ENCODE measurements at regions of chr12 and their contacts with region 1.

Region 1: DNA sequence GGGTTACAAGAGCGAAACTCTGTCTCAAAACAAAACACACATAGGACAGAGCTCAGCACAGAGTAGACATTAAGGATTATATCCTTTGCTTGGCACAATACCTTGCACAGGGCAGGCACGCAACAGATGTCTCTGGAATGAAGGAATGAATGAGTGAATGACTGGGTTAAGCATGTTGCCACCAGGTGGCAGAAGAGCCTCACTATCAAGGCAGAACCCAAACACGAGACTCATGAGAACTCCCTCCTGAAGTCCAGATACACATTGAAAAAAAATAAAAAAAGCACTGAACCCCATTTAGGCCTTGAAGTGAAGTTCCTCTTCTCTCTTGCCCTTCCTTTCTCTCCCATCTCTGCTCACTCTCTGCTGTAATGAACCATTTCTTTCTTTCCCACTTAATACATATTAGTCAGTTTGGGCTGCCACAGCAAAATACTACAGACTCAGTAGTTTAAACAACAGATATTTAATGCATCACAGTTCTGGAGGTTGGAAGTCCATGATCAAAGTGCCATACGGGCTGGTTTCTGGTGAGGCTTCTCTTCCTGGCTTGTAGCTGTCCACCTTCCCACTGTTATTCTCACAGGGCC is 26.6 kb upstream of the LTA4H start:
- DNase-seq: no peak
- ATAC-seq: peak; percentile 95
- H3K4me3 ChIP-seq: no peak overlapping the region
- H3K27ac ChIP-seq: no peak overlapping the region
- H3K4me1 ChIP-seq: no peaks in the 10 kb centered on the region
- H3K27me3 ChIP-seq: no peaks in the 10 kb centered on the region
- CTCF ChIP-seq: peak; percentile 88

Region 2: DNA sequence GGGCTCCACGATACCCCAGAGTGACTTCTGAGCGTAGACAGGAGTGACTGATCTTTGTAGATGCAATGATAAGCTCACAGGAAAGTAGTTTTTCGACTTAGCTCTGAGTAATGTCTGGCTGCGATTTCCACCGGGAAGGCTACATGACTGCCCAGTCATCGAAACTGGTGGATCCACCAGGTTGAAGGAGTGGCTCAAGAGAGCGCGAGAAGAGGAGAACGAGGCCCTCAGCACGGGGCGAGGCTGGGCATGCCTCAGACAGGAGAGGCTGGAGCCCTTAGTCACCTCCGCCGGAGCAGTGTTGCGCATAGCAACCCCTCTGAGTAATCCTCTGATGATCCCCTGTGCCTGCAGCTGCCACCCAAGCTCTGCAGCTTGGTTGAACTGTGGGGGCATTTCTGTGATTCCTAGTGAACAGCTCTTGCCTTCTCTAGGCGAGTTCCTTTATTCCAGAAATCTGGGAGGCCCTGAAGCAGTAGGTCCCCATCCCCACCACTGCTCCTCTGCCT is 157.8 kb after region 1 on chr12:
- intact Hi-C with region 1: loop called (anchors 5 kb)
- DNase-seq: peak; percentile 91
- ATAC-seq: peak; percentile 93
- H3K4me3 ChIP-seq: no peak overlapping the region
- H3K27ac ChIP-seq: peak overlapping the region; percentile 77
- H3K4me1 ChIP-seq: peaks cover 28% of the 10 kb centered on the region
- H3K27me3 ChIP-seq: no peaks in the 10 kb centered on the region
- CTCF ChIP-seq: no peak

Region 3: DNA sequence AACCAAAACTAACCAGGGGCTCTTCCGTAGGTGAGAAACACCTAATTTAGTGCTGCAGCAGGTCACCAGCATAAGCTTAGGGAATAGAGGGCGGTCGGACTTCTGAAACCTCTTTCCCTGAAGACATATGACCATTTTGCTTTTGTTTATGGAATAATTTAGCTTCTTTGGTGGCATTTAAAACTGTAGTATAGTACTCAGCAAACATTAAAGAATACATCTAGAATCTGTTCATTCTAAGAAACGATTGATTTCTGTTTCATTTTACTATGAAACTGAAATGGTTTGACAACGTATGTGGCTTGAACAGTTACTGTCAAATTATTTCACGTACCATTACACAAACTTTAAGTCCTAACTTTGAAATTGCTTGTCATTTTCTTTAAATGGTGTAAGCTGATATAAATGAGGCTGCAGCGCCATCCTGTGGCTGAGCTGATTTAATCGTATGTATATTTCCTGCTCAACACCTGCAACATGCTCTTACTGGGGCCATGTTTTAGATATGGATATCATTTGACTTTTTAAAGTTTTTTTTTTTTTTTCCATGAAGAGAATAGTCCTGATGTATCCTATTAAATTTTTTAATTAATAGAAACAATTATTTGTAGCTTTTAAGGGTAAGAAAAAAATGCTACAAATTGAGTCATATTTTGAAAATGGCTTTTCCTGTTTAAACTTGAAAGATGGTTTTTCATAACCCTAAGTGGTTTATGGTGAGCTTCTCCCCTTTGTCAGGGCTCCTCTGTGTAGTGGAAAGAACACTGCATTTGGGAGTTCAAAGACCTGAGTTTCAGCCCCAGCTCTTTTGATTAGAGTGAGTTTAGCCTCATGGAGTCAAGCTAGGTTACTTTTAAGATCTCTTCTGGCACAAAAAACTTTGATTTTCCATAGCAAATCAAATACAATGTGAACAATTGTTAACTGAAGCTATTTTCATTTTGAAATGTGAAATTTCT is 454.8 kb after region 1 on chr12:
- intact Hi-C with region 1: loop called (anchors 5 kb)
- DNase-seq: peak; percentile 71
- ATAC-seq: peak; percentile 89
- H3K4me3 ChIP-seq: no peak overlapping the region
- H3K27ac ChIP-seq: no peak overlapping the region
- H3K4me1 ChIP-seq: peaks cover 4% of the 10 kb centered on the region
- H3K27me3 ChIP-seq: no peaks in the 10 kb centered on the region
- CTCF ChIP-seq: peak; percentile 69

Measured in upper lobe of right lung (tissue), 1 donor.